A673 (cell line): ENCODE measurements at regions of chr18 and their contacts with region 1.

Region 1: GRCh38 chr18:67217551-67218166 is 298.9 kb downstream of the DSEL start:
- DNase-seq: peak; percentile 77
- H3K4me3 ChIP-seq: no peak overlapping the region
- H3K27ac ChIP-seq: no peak overlapping the region
- H3K4me1 ChIP-seq: peaks cover 16% of the 10 kb centered on the region
- H3K27me3 ChIP-seq: no peaks in the 10 kb centered on the region
- CTCF ChIP-seq: peak; percentile 73

Region 2: DNA sequence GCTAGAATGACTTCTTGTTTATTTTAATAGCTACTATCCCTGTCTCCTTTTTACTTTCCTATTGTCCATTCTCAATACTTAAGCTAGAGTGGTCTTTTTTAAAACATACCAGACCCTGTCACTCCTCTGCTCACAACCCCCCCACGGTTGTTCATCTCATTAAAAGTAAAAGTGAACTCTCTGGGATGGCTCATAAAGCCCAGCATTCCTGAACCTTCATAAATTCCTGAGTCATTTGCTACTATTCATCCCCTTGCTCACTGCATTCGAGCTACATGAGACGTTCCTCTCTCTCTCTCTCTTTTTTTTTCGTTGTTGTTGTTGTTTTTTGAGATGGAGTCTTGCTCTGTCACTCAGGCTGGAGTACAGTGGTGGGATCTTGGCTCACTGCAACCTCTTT is 447.6 kb after region 1 on chr18:
- CTCF ChIA-PET with region 1: no interaction called
- POLR2A ChIA-PET with region 1: no interaction called
- intact Hi-C with region 1: loop called (anchors 10 kb)
- DNase-seq: no peak
- H3K4me3 ChIP-seq: no peak overlapping the region
- H3K27ac ChIP-seq: peak overlapping the region; percentile 69
- H3K4me1 ChIP-seq: peaks cover 24% of the 10 kb centered on the region
- H3K27me3 ChIP-seq: no peaks in the 10 kb centered on the region
- CTCF ChIP-seq: no peak

Region 3: GRCh38 chr18:68623342-68623741 is 1405.7 kb after region 1 on chr18:
- CTCF ChIA-PET with region 1: no interaction called
- POLR2A ChIA-PET with region 1: no interaction called
- intact Hi-C with region 1: loop called (anchors 2 kb)
- DNase-seq: peak; percentile 92
- H3K4me3 ChIP-seq: no peak overlapping the region
- H3K27ac ChIP-seq: peak overlapping the region; percentile 57
- H3K4me1 ChIP-seq: peaks cover 16% of the 10 kb centered on the region
- H3K27me3 ChIP-seq: no peaks in the 10 kb centered on the region
- CTCF ChIP-seq: peak; percentile 85

Region 4: GRCh38 chr18:68735483-68736343 is 1518.1 kb after region 1 on chr18:
- CTCF ChIA-PET with region 1: interaction called, 4 read pairs
- POLR2A ChIA-PET with region 1: no interaction called
- intact Hi-C with region 1: loop called (anchors 2 kb)
- DNase-seq: peak; percentile 78
- H3K4me3 ChIP-seq: no peak overlapping the region
- H3K27ac ChIP-seq: no peak overlapping the region
- H3K4me1 ChIP-seq: peaks cover 18% of the 10 kb centered on the region
- H3K27me3 ChIP-seq: no peaks in the 10 kb centered on the region
- CTCF ChIP-seq: peak; percentile 91